BJ (cell line): ENCODE measurements at regions of chr7 and their contacts with region 1.

Region 1: GRCh38 chr7:2069472-2069860 is 163.3 kb downstream of the MAD1L1 start:
- DNase-seq: no peak
- H3K4me3 ChIP-seq: no peak overlapping the region
- H3K27me3 ChIP-seq: no peaks in the 10 kb centered on the region
- CTCF ChIP-seq: no peak

Region 2: GRCh38 chr7:2037808-2038522 is 31.5 kb before region 1 on chr7:
- CTCF ChIA-PET with region 1: no interaction called
- POLR2A ChIA-PET with region 1: no interaction called
- DNase-seq: peak; percentile 15
- H3K4me3 ChIP-seq: peak overlapping the region; percentile 18
- H3K27me3 ChIP-seq: no peaks in the 10 kb centered on the region
- CTCF ChIP-seq: no peak

Region 3: GRCh38 chr7:2082139-2082998 is 12.9 kb after region 1 on chr7:
- CTCF ChIA-PET with region 1: interaction called, 6 read pairs
- POLR2A ChIA-PET with region 1: interaction called, 12 read pairs
- DNase-seq: peak; percentile 52
- H3K4me3 ChIP-seq: no peak overlapping the region
- H3K27me3 ChIP-seq: no peaks in the 10 kb centered on the region
- CTCF ChIP-seq: no peak